Activated CD8-positive, alpha-beta memory T cell treated with anti-CD3 and anti-CD28 coated beads, Interleukin-2, amount 10 ng/mL, durations not matched to agents 7 days and 5 days (primary cell): ENCODE measurements at regions of chr17 and their contacts with region 1.

Region 1: DNA sequence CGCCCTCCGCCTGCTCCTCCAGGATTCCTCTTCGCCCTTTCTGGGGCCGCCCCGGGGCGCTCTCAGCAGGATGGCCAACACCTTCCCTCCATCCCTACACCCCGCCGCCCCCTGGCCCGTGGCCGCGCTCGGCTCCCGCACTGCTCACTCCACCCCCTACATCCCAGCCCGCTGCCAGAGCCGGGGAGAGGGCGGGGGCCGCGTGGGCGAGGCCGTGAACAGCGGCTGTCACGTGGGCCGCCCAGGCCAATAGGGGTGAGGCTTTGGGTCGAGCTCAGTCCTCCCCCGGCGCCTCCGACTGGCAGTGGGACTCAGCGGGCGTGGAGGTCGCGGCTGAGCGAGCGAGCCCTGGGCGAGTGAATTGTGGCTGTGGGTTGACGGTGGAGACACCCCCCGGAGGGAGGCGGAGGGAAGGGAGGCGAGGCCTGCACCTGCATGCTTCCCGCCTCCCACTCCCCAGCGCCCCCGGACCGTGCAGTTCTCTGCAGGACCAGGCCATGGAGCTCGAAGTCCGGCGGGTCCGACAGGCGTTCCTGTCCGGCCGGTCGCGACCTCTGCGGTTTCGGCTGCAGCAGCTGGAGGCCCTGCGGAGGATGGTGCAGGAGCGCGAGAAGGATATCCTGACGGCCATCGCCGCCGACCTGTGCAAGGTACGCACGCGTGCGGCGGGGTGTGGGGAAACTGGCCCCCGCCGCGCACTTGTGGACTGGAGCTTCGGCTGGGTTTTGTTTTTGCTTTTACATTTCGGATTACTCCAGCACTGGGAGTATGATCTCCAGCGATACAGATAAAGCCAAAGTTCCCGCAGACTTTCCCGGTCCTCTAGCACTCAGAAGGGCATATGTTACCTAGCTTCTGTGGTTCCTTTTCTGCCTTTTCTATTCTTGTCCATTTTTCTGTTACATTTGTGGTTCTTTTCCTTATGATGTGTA is at the start of gene ALDH3A2:
- DNase-seq: peak; percentile 96
- ATAC-seq: peak; percentile 97
- H3K4me3 Mint-ChIP-seq: peak within 1 kb of the TSS; percentile 90
- H3K27ac Mint-ChIP-seq: peak within 1 kb of the TSS; percentile 95
- H3K4me1 Mint-ChIP-seq: peaks cover 41% of the 10 kb centered on the region
- H3K27me3 Mint-ChIP-seq: peaks cover 12% of the 10 kb centered on the region
- total RNA-seq, gene ALDH3A2: 29.9 to 30.5 TPM

Region 2: GRCh38 chr17:19664136-19664820 is 15.5 kb after region 1 on chr17:
- CTCF ChIA-PET with region 1: interaction called, 11 read pairs
- DNase-seq: no peak
- ATAC-seq: no peak
- H3K4me3 Mint-ChIP-seq: no peak overlapping the region
- H3K27ac Mint-ChIP-seq: no peak overlapping the region
- H3K4me1 Mint-ChIP-seq: no peaks in the 10 kb centered on the region
- H3K27me3 Mint-ChIP-seq: no peaks in the 10 kb centered on the region